Sigmoid colon (tissue), 7 donors: ENCODE measurements at regions of chrX and their contacts with region 1.

Region 1: DNA sequence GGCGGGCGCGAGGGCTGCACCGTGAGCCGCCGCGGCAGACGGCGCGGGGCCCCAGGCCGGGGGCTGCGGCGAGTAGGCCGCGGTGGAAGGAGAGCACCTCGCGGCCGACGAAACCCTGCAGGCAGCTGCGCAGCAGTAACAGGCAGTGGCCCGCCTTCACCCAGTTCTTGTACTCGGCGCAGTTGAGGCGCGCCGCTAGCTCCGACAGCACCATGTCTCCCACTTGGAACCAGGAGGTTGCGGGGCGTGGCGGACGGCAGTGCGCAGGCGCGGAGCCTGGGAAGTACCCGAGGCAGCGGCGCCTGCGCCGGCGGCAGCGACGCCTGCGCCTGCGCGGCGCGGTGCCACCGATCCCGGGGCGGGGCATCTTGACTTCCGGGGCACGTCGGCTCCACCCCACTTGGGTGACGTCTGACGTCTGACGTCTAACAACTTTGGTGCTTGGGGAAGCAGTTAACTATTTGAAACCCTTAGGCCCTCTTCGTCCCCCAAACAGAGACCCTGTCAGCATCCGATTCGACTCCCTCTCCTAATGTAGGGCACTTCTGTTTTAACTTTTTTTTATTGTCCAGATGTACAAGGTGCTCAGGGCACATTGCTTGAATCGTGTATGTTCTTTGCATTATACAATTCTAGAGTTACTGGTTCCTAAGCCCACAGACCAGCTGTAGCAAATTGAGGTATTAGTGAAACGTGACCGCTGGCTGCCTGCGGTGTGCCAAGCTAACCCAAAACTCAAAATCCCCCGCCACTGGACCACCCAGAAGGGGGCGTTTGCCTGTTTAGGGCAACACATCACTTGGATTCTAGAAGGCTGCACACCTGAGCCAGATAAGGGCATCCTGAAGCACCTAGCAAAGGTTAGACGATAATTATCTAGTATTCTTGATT is at the start of gene CXorf38:
- DNase-seq: peak; percentile 97
- H3K4me3 ChIP-seq: peak within 1 kb of the TSS; percentile 56 to 90 (median 78)
- H3K27ac ChIP-seq: peak within 1 kb of the TSS; percentile 82 to 89 (median 85)
- H3K4me1 ChIP-seq: peaks cover 0 to 46% (median 19%) of the 10 kb centered on the region in 4 donors
- H3K27me3 ChIP-seq: no peaks in the 10 kb centered on the region
- CTCF ChIP-seq: no peak
- EP300 ChIP-seq: peak in 1 of 4 donors; percentile 51
- POLR2A ChIP-seq: peak in 1 of 2 donors; percentile 40
- total RNA-seq, gene CXorf38: 9.2 to 11.4 (median 9.8) TPM

Region 2: GRCh38 chrX:40580537-40581335 is 66.8 kb before region 1 on chrX and contains the start of gene ATP6AP2:
- intact Hi-C with region 1: loop called (anchors 5 kb)
- DNase-seq: peak; percentile 96
- H3K4me3 ChIP-seq: peak within 1 kb of the TSS; percentile 56 to 86 (median 82)
- H3K27ac ChIP-seq: peak within 1 kb of the TSS; percentile 90 to 98 (median 93)
- H3K4me1 ChIP-seq: peaks cover 0 to 10% (median 8%) of the 10 kb centered on the region in 4 donors
- H3K27me3 ChIP-seq: no peaks in the 10 kb centered on the region
- CTCF ChIP-seq: no peak
- EP300 ChIP-seq: no peak
- POLR2A ChIP-seq: peak; percentile 54 to 56
- total RNA-seq, gene ATP6AP2: 86.4 to 121 (median 101) TPM

Region 3: GRCh38 chrX:40792433-40792832 is 144.9 kb after region 1 on chrX:
- intact Hi-C with region 1: loop called (anchors 2 kb)
- DNase-seq: no peak
- H3K4me3 ChIP-seq: no peak overlapping the region
- H3K27ac ChIP-seq: no peak overlapping the region
- H3K4me1 ChIP-seq: peaks cover 0 to 5% (median 2%) of the 10 kb centered on the region in 4 donors
- H3K27me3 ChIP-seq: no peaks in the 10 kb centered on the region
- CTCF ChIP-seq: no peak
- EP300 ChIP-seq: no peak
- POLR2A ChIP-seq: no peak

Region 4: GRCh38 chrX:41116948-41117347 is 469.4 kb after region 1 on chrX:
- intact Hi-C with region 1: loop called (anchors 2 kb)
- DNase-seq: no peak
- H3K4me3 ChIP-seq: no peak overlapping the region
- H3K27ac ChIP-seq: no peak overlapping the region
- H3K4me1 ChIP-seq: peaks cover 0 to 41% (median 12%) of the 10 kb centered on the region in 4 donors
- H3K27me3 ChIP-seq: no peaks in the 10 kb centered on the region
- CTCF ChIP-seq: no peak
- EP300 ChIP-seq: no peak
- POLR2A ChIP-seq: no peak

Region 5: DNA sequence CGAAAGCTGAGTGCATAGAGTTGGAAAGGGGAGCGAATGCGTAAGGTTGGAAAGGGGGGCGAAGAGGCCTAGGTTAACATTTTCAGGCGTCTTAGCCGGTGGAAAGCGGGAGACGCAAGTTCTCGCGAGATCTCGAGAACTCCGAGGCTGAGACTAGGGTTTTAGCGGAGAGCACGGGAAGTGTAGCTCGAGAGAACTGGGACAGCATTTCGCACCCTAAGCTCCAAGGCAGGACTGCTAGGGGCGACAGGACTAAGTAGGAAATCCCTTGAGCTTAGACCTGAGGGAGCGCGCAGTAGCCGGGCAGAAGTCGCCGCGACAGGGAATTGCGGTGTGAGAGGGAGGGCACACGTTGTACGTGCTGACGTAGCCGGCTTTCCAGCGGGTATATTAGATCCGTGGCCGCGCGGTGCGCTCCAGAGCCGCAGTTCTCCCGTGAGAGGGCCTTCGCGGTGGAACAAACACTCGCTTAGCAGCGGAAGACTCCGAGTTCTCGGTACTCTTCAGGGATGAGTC is 686.2 kb after region 1 on chrX and contains the start of gene DDX3X:
- intact Hi-C with region 1: loop called (anchors 5 kb)
- DNase-seq: peak; percentile 97
- H3K4me3 ChIP-seq: peak within 1 kb of the TSS; percentile 80 to 99 (median 94)
- H3K27ac ChIP-seq: peak within 1 kb of the TSS; percentile 98 to 100 (median 100)
- H3K4me1 ChIP-seq: peaks cover 0 to 46% (median 17%) of the 10 kb centered on the region in 4 donors
- H3K27me3 ChIP-seq: no peaks in the 10 kb centered on the region
- CTCF ChIP-seq: peak in 1 of 4 experiments; percentile 38
- EP300 ChIP-seq: peak in 1 of 4 donors; percentile 7
- POLR2A ChIP-seq: peak; percentile 95 to 98
- total RNA-seq, gene DDX3X: 146 to 218 (median 214) TPM